ENCODE measurements at regions of chr1 and their contacts with region 1.

Region 1: DNA sequence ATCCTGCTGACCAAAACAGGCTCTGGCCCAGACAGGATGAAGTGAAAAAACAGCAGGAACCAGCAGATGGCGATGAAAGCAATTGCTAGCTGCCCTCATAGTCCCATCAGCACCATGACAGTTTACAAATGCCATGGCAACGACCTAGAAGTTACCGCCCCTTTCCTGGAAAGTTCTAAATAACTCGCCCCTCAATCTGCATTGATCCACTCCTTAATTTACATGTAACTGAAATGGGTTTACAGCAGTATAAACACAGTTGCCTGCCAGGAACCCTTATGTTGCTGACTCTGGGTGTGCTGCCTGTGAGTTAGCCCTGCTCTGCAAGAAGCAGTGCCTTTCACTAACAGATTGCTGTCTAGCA is 65.5 kb upstream of the CR1L start:
- DNase-seq: peak; percentile 92
- ATAC-seq: peak; percentile 99
- H3K4me3 ChIP-seq: no peak overlapping the region
- H3K27ac ChIP-seq: no peak overlapping the region
- H3K4me1 ChIP-seq: no peaks in the 10 kb centered on the region
- H3K27me3 ChIP-seq: peaks cover 28% of the 10 kb centered on the region
- CTCF ChIP-seq: peak; percentile 91

Region 2: GRCh38 chr1:207619871-207620542 is 40.6 kb after region 1 on chr1:
- CTCF ChIA-PET with region 1: interaction called, 3 read pairs
- POLR2A ChIA-PET with region 1: no interaction called
- intact Hi-C with region 1: loop called (anchors 1 kb)
- DNase-seq: peak; percentile 81
- ATAC-seq: peak; percentile 97
- H3K4me3 ChIP-seq: no peak overlapping the region
- H3K27ac ChIP-seq: no peak overlapping the region
- H3K4me1 ChIP-seq: no peaks in the 10 kb centered on the region
- H3K27me3 ChIP-seq: peaks cover 36% of the 10 kb centered on the region
- CTCF ChIP-seq: peak; percentile 96

Region 3: GRCh38 chr1:207672522-207673130 is 93.2 kb after region 1 on chr1:
- CTCF ChIA-PET with region 1: interaction called, 4 read pairs
- POLR2A ChIA-PET with region 1: no interaction called
- intact Hi-C with region 1: loop called (anchors 1 kb)
- DNase-seq: peak; percentile 86
- ATAC-seq: peak; percentile 97
- H3K4me3 ChIP-seq: no peak overlapping the region
- H3K27ac ChIP-seq: no peak overlapping the region
- H3K4me1 ChIP-seq: no peaks in the 10 kb centered on the region
- H3K27me3 ChIP-seq: peaks cover 62% of the 10 kb centered on the region
- CTCF ChIP-seq: peak; percentile 98